ENCODE measurements at regions of chr7 and their contacts with region 1.

Region 1: GRCh38 chr7:41705109-41705901 is 2.4 kb upstream of the INHBA start:
- DNase-seq: peak; percentile 52
- H3K4me3 Mint-ChIP-seq: peak overlapping the region; percentile 75
- H3K27ac Mint-ChIP-seq: no peak overlapping the region
- H3K4me1 Mint-ChIP-seq: peaks cover 8% of the 10 kb centered on the region
- H3K27me3 Mint-ChIP-seq: peaks cover 41% of the 10 kb centered on the region

Region 2: GRCh38 chr7:40329601-40330153 is 1375.6 kb before region 1 on chr7:
- intact Hi-C with region 1: loop called (anchors 2 kb)
- DNase-seq: no peak
- H3K4me3 Mint-ChIP-seq: no peak overlapping the region
- H3K27ac Mint-ChIP-seq: no peak overlapping the region
- H3K4me1 Mint-ChIP-seq: no peaks in the 10 kb centered on the region
- H3K27me3 Mint-ChIP-seq: no peaks in the 10 kb centered on the region

Region 3: DNA sequence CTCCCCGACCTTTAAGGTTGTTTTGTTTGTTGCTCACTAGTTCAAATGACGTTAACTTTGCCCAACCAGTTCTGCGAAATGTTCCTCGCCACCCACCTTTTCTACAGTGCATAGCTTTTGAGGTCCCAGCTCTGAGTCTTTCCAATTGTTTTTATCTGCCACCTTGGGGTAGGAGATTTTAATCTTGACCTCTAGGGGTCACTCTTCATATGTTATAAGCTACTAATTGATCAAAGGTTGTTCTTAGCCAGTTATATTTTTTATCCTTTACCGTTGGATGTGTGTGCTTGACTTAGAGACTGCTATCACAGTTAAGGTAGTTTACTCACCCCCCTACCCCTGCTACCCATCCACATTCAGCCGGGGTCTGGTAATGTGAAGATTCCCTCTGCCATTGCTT is 1198.1 kb before region 1 on chr7:
- intact Hi-C with region 1: loop called (anchors 10 kb)
- DNase-seq: no peak
- H3K4me3 Mint-ChIP-seq: no peak overlapping the region
- H3K27ac Mint-ChIP-seq: no peak overlapping the region
- H3K4me1 Mint-ChIP-seq: no peaks in the 10 kb centered on the region
- H3K27me3 Mint-ChIP-seq: no peaks in the 10 kb centered on the region

Region 4: DNA sequence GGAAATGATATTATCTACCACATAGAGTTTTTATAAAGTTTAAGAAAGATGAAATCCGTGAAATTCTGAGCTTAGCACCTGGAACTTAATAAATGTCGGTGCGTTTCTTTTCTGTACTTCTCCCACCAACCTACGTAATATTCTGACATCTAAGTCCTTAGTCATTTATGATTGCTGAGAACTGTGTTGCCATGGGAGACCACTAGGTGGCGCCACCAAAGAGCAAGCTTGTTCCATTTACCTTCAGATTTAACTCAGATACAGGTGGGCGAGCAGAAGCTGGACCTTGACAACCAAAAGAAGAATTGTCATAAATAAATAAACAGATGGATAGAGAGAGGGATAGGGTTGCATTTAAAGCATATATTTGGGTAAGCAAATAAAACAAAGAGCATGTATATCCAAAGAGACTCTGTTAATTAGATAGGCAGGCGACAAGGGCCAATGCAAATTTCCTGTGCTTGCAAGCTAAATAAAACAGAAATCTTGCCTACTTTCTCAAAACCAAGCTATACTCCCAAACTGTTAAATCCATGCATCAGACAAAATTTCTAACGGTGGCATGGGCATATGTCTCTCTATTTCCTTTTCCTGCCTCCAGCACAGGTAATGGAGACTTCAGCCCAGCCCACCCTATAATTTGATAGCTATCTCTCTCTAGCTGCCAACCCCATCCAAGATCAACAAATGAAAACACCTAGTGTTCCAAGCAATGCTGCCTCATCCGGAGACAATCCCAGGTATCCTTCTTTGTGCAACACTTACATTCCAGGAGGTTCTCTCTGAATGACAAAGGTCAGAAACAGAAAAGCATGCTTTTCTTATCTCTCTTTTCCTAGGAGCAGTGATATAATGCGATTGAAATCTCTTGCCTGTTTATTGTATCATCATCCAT is 702.0 kb before region 1 on chr7:
- intact Hi-C with region 1: loop called (anchors 1 kb)
- DNase-seq: peak; percentile 2
- H3K4me3 Mint-ChIP-seq: no peak overlapping the region
- H3K27ac Mint-ChIP-seq: no peak overlapping the region
- H3K4me1 Mint-ChIP-seq: no peaks in the 10 kb centered on the region
- H3K27me3 Mint-ChIP-seq: no peaks in the 10 kb centered on the region